Naive thymus-derived CD4-positive, alpha-beta T cell (primary cell): ENCODE measurements at regions of chr11 and their contacts with region 1.

Region 1: GRCh38 chr11:107549253-107549953 is 16.1 kb downstream of the ALKBH8 start:
- DNase-seq: peak in 7 of 9 donors; percentile 7 to 46 (median 37)
- ATAC-seq: peak; percentile 70
- H3K4me3 ChIP-seq: no peak overlapping the region
- H3K4me3 Mint-ChIP-seq: no peak overlapping the region
- H3K27ac ChIP-seq: no peak overlapping the region
- H3K27ac Mint-ChIP-seq: no peak overlapping the region
- H3K4me1 ChIP-seq: no peaks in the 10 kb centered on the region
- H3K4me1 Mint-ChIP-seq: peaks cover 0 to 5% (median 0%) of the 10 kb centered on the region in 7 donors
- H3K27me3 ChIP-seq: no peaks in the 10 kb centered on the region
- H3K27me3 Mint-ChIP-seq: no peaks in the 10 kb centered on the region

Region 2: DNA sequence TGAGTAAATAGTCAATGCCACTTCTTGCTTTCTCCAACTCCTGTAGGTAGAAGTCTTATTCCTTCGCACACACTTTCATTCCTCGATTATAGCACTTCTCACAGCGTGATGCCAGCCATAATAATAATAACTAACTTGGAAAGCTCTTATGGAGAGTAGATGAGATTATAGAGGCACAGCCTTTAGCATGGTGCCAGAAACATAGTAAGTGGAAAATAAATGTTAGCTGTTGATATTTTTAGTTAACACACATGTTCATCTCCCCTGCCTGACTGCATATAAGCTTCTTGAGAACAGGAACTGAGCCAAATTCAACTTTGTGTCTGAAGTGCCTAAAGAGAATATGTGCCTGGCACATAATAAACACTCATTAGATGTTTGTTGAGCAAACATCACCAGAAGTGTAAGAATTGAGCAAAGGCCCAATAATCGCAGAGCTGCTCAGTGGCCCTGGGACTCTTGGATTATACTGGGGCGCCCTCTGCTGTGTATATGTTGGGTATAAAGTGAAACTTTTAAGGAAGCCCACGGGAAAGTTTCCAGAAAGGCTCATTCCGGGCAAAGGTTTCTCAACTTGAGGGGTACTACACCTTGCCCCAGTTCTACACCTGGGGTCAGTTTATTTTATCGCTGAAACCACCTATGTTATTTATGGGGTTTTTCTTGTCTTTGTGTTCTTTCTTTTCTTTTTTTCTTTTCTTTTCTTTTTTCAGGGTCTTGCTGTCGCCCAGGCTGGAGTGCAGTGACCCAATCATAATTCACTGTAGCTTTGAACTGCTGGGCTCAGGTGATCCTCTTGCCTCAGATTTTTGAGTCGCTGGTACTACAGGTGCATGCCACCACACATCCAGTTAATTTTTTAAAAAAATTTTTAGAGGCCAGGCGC is 140.2 kb after region 1 on chr11:
- CTCF ChIA-PET with region 1: interaction called, 25 read pairs
- POLR2A ChIA-PET with region 1: no interaction called
- intact Hi-C with region 1: loop called (anchors 1 kb)
- DNase-seq: peak; percentile 7 to 51 (median 45)
- ATAC-seq: peak; percentile 84
- H3K4me3 ChIP-seq: no peak overlapping the region
- H3K4me3 Mint-ChIP-seq: no peak overlapping the region
- H3K27ac ChIP-seq: no peak overlapping the region
- H3K27ac Mint-ChIP-seq: no peak overlapping the region
- H3K4me1 ChIP-seq: no peaks in the 10 kb centered on the region
- H3K4me1 Mint-ChIP-seq: peaks cover 0 to 5% (median 0%) of the 10 kb centered on the region in 7 donors
- H3K27me3 ChIP-seq: no peaks in the 10 kb centered on the region
- H3K27me3 Mint-ChIP-seq: peaks cover 12 to 26% (median 20%) of the 10 kb centered on the region in 5 donors

Region 3: DNA sequence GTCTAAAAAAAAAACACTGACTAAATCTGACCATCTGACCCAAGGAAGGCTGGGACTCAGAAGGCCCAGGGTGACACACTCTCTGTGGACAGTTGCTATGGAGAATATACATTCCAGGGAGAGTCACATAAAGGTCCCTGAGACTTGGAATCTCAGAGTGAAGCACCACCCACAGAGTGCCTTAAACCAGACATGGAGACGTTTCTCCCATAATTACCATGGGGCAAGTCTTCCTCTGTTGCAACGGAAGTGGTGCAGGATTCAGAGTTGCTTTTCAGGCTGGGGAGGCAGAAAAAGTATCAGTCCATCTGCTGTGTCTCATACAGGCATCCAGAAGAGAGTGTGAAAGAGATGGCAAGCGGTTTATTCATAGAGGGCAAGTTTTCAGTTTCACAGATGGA is 221.1 kb after region 1 on chr11:
- CTCF ChIA-PET with region 1: no interaction called
- POLR2A ChIA-PET with region 1: no interaction called
- intact Hi-C with region 1: loop called (anchors 1 kb)
- DNase-seq: no peak
- ATAC-seq: no peak
- H3K4me3 ChIP-seq: no peak overlapping the region
- H3K4me3 Mint-ChIP-seq: no peak overlapping the region
- H3K27ac ChIP-seq: no peak overlapping the region
- H3K27ac Mint-ChIP-seq: no peak overlapping the region
- H3K4me1 ChIP-seq: no peaks in the 10 kb centered on the region
- H3K4me1 Mint-ChIP-seq: peaks cover 0 to 2% (median 0%) of the 10 kb centered on the region in 7 donors
- H3K27me3 ChIP-seq: no peaks in the 10 kb centered on the region
- H3K27me3 Mint-ChIP-seq: peaks cover 0 to 16% (median 10%) of the 10 kb centered on the region in 5 donors

Region 4: DNA sequence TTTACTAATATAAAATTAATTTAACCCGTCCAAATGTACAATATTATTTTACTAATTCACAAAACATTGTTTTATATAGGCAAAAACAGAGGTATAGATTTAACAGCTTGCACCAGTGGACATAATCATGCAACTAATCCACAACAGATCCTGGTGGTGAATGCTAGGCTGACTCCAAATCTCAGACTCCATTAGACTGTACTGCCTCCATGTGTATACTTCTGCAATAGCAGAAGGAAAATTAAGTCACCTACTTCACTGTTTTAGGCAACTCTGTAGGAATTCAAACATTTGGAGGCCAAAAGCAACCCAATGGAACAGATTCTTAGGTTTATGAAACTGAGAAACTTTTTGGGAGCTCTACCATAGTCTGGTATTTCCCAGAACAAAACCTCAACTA is 348.9 kb after region 1 on chr11:
- CTCF ChIA-PET with region 1: no interaction called
- POLR2A ChIA-PET with region 1: no interaction called
- intact Hi-C with region 1: loop called in 1 of 2 experiments (anchors 1 kb)
- DNase-seq: peak in 2 of 9 donors; percentile 3 to 9
- ATAC-seq: peak; percentile 76
- H3K4me3 ChIP-seq: no peak overlapping the region
- H3K4me3 Mint-ChIP-seq: no peak overlapping the region
- H3K27ac ChIP-seq: no peak overlapping the region
- H3K27ac Mint-ChIP-seq: no peak overlapping the region
- H3K4me1 ChIP-seq: no peaks in the 10 kb centered on the region
- H3K4me1 Mint-ChIP-seq: no peaks in the 10 kb centered on the region
- H3K27me3 ChIP-seq: no peaks in the 10 kb centered on the region
- H3K27me3 Mint-ChIP-seq: peaks cover 0 to 11% (median 9%) of the 10 kb centered on the region in 5 donors